Mammary epithelial cell (primary cell): ENCODE measurements at regions of chr10 and their contacts with region 1.

Region 1: DNA sequence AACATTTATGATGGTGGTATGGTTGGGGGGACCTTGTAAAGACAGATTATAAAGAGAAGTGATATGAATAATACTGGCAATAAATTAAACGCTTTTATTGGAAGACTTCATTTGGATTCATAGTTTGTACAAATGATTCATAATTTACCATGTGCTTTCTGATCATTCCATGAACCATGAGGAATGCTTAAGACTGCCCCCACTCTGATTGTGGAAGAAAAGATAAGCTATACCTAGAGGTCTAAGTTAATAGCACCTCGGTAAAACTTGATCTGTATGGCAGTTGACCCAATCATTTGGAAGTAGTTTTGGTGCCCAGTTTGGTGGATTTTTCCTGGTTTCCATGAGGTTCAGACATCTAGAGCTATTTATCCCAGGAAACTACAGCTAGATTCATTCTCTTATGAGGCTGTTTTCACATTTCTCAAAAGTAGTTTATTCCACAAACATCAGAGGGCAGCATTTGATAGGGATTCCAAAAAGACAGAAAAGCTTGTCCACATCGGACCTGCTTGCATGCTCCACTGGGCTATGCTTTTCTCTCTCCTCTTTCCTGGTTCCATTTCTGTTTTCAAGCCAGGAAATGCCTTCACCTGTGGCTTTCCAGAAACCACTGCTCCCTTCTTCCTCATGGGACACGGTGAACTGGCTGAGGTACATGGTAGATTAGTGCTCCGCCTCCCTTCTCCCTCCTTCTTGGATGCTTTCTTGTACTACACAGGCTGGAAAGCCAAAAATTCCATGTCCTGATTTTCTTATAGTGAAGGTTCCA is 29.2 kb downstream of the TFAM start:
- DNase-seq: peak; percentile 64
- H3K4me3 ChIP-seq: no peak overlapping the region
- H3K27ac ChIP-seq: no peak overlapping the region
- H3K4me1 ChIP-seq: peaks cover 10% of the 10 kb centered on the region
- H3K27me3 ChIP-seq: no peaks in the 10 kb centered on the region
- CTCF ChIP-seq: peak; percentile 35 to 62

Region 2: GRCh38 chr10:58486821-58487220 is 72.4 kb after region 1 on chr10:
- CTCF ChIA-PET with region 1: no interaction called
- dilution Hi-C with region 1: no loop called
- in situ Hi-C with region 1: no loop called
- intact Hi-C with region 1: loop called (anchors 1 kb)
- DNase-seq: no peak
- H3K4me3 ChIP-seq: no peak overlapping the region
- H3K27ac ChIP-seq: no peak overlapping the region
- H3K4me1 ChIP-seq: no peaks in the 10 kb centered on the region
- H3K27me3 ChIP-seq: no peaks in the 10 kb centered on the region
- CTCF ChIP-seq: no peak

Region 3: DNA sequence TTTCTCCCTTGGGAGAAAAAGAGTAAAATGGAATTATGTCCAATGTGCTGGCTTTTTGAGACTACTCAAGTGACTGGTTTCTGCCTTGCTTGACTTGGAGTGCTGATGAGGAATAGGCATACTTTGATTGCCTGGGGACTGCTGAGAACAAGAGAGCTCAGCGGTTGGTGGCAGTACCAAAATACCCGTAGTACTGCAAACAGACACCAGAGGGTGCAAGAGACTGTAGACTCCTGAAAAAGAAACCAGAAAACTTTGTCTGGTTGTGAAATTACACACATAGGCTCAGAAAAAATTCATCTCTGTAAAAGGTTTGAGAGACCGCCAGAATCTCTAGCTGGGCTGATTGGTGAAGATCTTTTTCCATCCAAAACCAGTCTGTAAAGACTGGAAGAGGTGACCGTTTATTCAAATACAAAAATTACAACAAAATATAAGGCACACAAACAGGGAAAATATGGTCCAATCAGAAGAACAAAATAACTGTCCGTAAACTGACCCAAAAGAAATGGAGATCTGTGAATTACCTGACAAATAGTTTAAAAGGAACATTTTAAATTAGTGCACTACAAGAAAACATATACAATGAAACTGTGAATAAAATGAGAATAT is 116.7 kb after region 1 on chr10:
- CTCF ChIA-PET with region 1: interaction called, 7 read pairs
- dilution Hi-C with region 1: no loop called
- in situ Hi-C with region 1: no loop called
- intact Hi-C with region 1: loop called (anchors 1 kb)
- DNase-seq: peak; percentile 68
- H3K4me3 ChIP-seq: no peak overlapping the region
- H3K27ac ChIP-seq: no peak overlapping the region
- H3K4me1 ChIP-seq: peaks cover 4% of the 10 kb centered on the region
- H3K27me3 ChIP-seq: no peaks in the 10 kb centered on the region
- CTCF ChIP-seq: peak; percentile 77 to 82

Region 4: DNA sequence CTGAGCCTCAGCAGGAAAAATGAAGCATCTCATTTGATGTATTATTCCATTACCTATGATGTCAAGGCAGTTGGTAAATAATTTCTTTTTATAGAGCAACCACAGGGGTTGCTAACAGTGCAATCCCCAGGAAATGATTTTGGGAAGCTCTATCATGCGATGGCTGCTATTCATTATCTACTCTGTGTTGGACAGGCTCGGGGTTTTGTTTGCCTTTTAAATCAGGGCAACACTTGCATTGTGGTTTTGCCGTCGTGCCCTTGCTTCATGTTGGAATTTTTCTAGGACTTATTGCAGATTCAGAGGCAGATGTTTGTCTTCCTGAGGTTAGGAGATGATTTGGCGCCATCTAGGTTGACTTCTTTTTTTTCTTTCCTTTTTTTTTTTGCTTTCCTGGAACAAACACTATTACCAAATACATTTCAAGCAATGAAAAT is 226.7 kb after region 1 on chr10:
- CTCF ChIA-PET with region 1: no interaction called
- dilution Hi-C with region 1: no loop called
- in situ Hi-C with region 1: no loop called
- intact Hi-C with region 1: loop called (anchors 2 kb)
- DNase-seq: peak; percentile 95
- H3K4me3 ChIP-seq: peak overlapping the region in 1 of 3 experiments; percentile 1
- H3K27ac ChIP-seq: peak overlapping the region; percentile 81
- H3K4me1 ChIP-seq: peaks cover 34% of the 10 kb centered on the region
- H3K27me3 ChIP-seq: no peaks in the 10 kb centered on the region
- CTCF ChIP-seq: peak; percentile 8 to 46

Region 5: GRCh38 chr10:58781873-58782488 is 367.5 kb after region 1 on chr10:
- CTCF ChIA-PET with region 1: interaction called, 4 read pairs
- dilution Hi-C with region 1: no loop called
- in situ Hi-C with region 1: loop called in 1 of 2 experiments (anchors 25 kb)
- intact Hi-C with region 1: loop called (anchors 2 kb)
- DNase-seq: peak; percentile 47
- H3K4me3 ChIP-seq: no peak overlapping the region
- H3K27ac ChIP-seq: no peak overlapping the region
- H3K4me1 ChIP-seq: peaks cover 3% of the 10 kb centered on the region
- H3K27me3 ChIP-seq: no peaks in the 10 kb centered on the region
- CTCF ChIP-seq: peak; percentile 49 to 50

Region 6: DNA sequence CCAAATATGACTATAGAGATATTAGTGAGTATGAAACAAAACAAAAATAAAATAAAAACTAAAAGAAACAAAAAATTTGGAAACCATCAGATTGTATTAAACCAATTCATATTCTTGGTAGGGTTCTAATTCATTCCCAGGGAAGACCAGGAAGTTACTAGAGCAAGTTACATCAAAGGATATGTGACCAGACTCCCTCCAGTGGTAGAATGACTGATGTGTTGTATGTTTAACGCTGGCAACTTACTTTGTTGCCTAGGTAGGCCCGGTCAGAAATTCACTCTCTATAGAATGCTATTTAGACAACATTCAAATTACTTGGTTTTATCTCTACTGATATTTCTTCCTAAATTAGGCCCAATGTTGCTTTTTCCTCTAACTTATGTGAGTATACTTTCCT is 767.2 kb after region 1 on chr10:
- CTCF ChIA-PET with region 1: no interaction called
- dilution Hi-C with region 1: no loop called
- in situ Hi-C with region 1: no loop called
- intact Hi-C with region 1: loop called (anchors 2 kb)
- DNase-seq: peak; percentile 47
- H3K4me3 ChIP-seq: no peak overlapping the region
- H3K27ac ChIP-seq: no peak overlapping the region
- H3K4me1 ChIP-seq: peaks cover 8% of the 10 kb centered on the region
- H3K27me3 ChIP-seq: peaks cover 2% of the 10 kb centered on the region
- CTCF ChIP-seq: peak; percentile 58 to 72